A673 (cell line): ENCODE measurements at regions of chr1 and their contacts with region 1.

Region 1: GRCh38 chr1:199959515-199960110 is 67.9 kb upstream of the NR5A2 start:
- DNase-seq: no peak
- H3K4me3 ChIP-seq: no peak overlapping the region
- H3K27ac ChIP-seq: no peak overlapping the region
- H3K4me1 ChIP-seq: no peaks in the 10 kb centered on the region
- H3K27me3 ChIP-seq: no peaks in the 10 kb centered on the region
- CTCF ChIP-seq: no peak

Region 2: GRCh38 chr1:199909135-199909534 is 50.5 kb before region 1 on chr1:
- CTCF ChIA-PET with region 1: no interaction called
- POLR2A ChIA-PET with region 1: no interaction called
- intact Hi-C with region 1: loop called (anchors 10 kb)
- DNase-seq: peak; percentile 10
- H3K4me3 ChIP-seq: no peak overlapping the region
- H3K27ac ChIP-seq: no peak overlapping the region
- H3K4me1 ChIP-seq: no peaks in the 10 kb centered on the region
- H3K27me3 ChIP-seq: peaks cover 4% of the 10 kb centered on the region
- CTCF ChIP-seq: no peak